Activated naive CD4-positive, alpha-beta T cell treated with anti-CD3 and anti-CD28 coated beads for 36 hours (primary cell): ENCODE measurements at regions of chr11 and their contacts with region 1.

Region 1: DNA sequence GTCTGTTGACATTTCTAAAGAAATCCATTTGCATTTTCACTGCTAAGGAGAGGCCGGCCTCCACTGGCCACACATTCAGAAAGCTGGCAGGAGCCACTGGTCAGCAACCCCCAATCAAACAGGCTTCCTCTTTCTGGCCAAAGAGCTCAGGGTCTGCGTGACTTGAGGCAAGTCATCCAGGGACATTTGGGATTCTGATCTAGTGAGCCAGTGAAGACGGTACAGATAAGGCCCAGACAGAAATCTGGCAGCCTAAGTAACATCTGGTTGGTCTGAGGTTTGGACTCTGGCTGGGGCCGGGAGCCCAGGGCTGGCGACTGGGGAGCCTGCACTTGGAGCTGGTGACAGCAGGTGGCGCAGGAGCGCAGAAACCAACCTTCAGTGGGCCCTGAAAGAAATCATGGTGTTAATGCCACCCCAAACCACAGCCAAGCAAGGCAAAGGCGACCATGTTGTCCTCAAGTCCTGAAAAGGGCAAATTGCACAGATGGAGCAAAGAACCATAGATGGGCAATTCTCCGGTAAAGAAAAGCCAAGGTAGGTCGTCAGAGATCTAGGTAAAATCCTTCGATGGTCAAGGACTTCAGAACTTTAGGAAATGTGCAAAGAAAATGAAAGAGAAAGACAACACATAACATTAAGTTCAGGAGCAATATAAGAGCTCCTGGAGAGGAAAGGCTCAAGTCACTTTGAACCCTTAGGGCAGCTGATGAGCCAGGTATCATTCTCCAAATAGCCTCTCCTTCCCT is 99.4 kb upstream of the BLID start:
- DNase-seq: peak; percentile 41
- H3K4me3 Mint-ChIP-seq: no peak overlapping the region
- H3K27ac Mint-ChIP-seq: no peak overlapping the region
- H3K4me1 Mint-ChIP-seq: no peaks in the 10 kb centered on the region
- H3K27me3 Mint-ChIP-seq: peaks cover 6% of the 10 kb centered on the region

Region 2: DNA sequence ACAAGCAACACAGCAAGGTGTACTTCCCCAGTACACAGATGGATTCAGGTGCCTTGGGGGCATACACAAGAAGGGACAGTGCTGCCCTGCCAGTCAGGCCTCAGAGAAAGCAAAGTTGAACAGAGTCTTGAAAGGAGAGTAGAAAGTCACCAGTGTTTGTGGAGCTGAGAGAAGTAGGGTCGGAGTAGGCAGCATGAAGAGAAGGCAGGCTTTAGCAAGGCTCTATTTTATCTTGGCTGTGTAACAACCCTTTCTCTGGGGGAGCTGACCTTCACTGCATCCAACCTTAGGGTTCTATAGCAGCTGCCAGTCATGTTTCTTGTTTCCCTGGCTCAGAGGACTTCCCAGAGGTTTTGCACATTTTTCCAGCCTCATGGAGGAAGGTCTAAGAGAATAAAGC is 22.0 kb before region 1 on chr11:
- CTCF ChIA-PET with region 1: no interaction called
- intact Hi-C with region 1: no loop called
- DNase-seq: no peak
- H3K4me3 Mint-ChIP-seq: no peak overlapping the region
- H3K27ac Mint-ChIP-seq: no peak overlapping the region
- H3K4me1 Mint-ChIP-seq: no peaks in the 10 kb centered on the region
- H3K27me3 Mint-ChIP-seq: peaks cover 16% of the 10 kb centered on the region

Region 3: GRCh38 chr11:122505304-122506006 is 290.0 kb after region 1 on chr11:
- CTCF ChIA-PET with region 1: interaction called, 8 read pairs
- intact Hi-C with region 1: loop called (anchors 1 kb)
- DNase-seq: peak; percentile 75
- H3K4me3 Mint-ChIP-seq: no peak overlapping the region
- H3K27ac Mint-ChIP-seq: no peak overlapping the region
- H3K4me1 Mint-ChIP-seq: no peaks in the 10 kb centered on the region
- H3K27me3 Mint-ChIP-seq: peaks cover 30% of the 10 kb centered on the region

Region 4: GRCh38 chr11:122584670-122585069 is 369.3 kb after region 1 on chr11:
- CTCF ChIA-PET with region 1: no interaction called
- intact Hi-C with region 1: loop called (anchors 10 kb)
- DNase-seq: no peak
- H3K4me3 Mint-ChIP-seq: no peak overlapping the region
- H3K27ac Mint-ChIP-seq: no peak overlapping the region
- H3K4me1 Mint-ChIP-seq: peaks cover 7% of the 10 kb centered on the region
- H3K27me3 Mint-ChIP-seq: peaks cover under 1% of the 10 kb centered on the region

Region 5: GRCh38 chr11:122617926-122618325 is 402.5 kb after region 1 on chr11:
- CTCF ChIA-PET with region 1: no interaction called
- intact Hi-C with region 1: no loop called
- DNase-seq: no peak
- H3K4me3 Mint-ChIP-seq: no peak overlapping the region
- H3K27ac Mint-ChIP-seq: no peak overlapping the region
- H3K4me1 Mint-ChIP-seq: no peaks in the 10 kb centered on the region
- H3K27me3 Mint-ChIP-seq: no peaks in the 10 kb centered on the region